PC-3 (cell line): ENCODE measurements at regions of chr5 and their contacts with region 1.

Region 1: DNA sequence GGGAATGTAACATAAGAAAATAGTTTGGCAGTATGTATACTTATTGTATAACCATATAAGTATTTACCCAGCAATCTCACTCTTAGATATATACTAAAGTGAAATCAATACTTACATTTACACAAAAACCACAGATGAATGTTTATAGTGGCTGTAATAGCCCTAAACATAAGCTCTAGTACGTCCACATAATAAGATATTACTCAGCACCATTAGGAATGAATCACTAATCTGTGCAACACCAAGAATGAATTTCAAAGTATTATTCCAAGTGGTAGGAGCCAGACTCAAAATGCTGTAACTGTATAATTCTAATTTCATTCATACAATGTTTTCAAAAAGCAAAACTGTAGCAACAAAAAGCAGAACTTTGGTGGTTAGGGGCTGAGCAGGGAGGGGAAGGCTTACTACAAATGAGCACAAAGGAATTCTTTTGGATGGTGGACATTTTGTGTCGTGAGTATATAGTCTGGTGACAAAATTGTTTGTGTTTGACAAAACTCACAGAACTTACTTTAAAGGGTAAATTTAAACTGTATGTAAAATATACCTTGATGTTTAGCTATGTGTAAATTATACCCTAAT is 11.9 kb upstream of the C5orf46 start:
- DNase-seq: peak; percentile 94
- ATAC-seq: peak; percentile 73
- H3K4me3 ChIP-seq: peak overlapping the region; percentile 52; the same call in 1 of the 2 replicates
- H3K27ac ChIP-seq: peak overlapping the region; percentile 97
- H3K4me1 ChIP-seq: peaks cover 72% of the 10 kb centered on the region
- H3K27me3 ChIP-seq: no peaks in the 10 kb centered on the region
- CTCF ChIP-seq: no peak

Region 2: DNA sequence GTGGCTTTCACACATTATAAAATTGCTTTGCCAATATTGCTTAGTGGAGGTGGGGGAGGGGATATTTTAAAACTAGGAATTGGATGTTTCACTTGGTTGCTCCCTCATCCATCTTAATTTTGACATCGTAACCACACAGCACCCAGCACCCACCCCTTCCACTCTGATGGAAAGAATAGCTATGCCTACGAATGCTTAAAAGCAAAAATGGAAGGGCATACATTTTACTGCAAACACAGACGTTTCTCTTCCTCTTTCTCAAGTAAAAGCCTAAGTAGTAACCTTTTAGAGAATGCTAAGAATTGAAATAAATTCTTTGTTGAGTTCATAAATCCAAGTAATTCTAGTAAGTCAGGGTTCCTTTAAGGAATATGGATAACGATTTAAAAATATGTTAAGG is 205.6 kb before region 1 on chr5:
- CTCF ChIA-PET with region 1: no interaction called
- POLR2A ChIA-PET with region 1: no interaction called
- intact Hi-C with region 1: no loop called
- DNase-seq: no peak
- ATAC-seq: no peak
- H3K4me3 ChIP-seq: no peak overlapping the region
- H3K27ac ChIP-seq: no peak overlapping the region
- H3K4me1 ChIP-seq: peaks cover 12% of the 10 kb centered on the region
- H3K27me3 ChIP-seq: no peaks in the 10 kb centered on the region
- CTCF ChIP-seq: no peak

Region 3: DNA sequence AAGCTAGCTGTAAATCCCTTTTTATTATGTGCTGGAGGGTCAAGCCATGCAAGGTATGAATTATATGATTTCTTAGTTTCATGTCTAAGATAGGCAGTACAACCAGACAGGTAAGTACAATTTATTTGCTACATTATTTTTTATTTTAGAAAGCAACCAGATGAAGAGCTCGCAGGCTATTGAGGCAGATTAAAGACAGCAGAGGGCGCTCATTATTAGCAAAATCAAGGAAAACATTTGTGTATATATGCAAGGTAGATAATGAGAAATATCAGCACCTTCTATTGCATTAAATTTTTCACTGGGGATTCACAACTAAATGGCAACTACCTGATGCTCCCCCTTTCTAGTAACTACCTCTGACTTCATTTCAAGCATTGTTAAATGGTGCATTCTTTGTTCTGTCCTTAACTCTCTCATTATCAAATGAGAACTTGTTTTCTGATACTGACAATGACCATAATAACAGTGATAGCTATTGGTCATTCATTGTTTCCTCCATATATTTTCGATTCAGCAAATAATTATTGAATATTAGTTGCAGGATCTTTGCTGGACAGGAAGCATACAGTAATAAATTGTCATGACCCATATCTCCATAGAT is 31.1 kb before region 1 on chr5:
- CTCF ChIA-PET with region 1: interaction called, 3 read pairs
- POLR2A ChIA-PET with region 1: no interaction called
- intact Hi-C with region 1: loop called (anchors 1 kb)
- DNase-seq: peak; percentile 80
- ATAC-seq: peak; percentile 63
- H3K4me3 ChIP-seq: no peak overlapping the region
- H3K27ac ChIP-seq: peak overlapping the region; percentile 97
- H3K4me1 ChIP-seq: peaks cover 51% of the 10 kb centered on the region
- H3K27me3 ChIP-seq: no peaks in the 10 kb centered on the region
- CTCF ChIP-seq: peak; percentile 96

Region 4: DNA sequence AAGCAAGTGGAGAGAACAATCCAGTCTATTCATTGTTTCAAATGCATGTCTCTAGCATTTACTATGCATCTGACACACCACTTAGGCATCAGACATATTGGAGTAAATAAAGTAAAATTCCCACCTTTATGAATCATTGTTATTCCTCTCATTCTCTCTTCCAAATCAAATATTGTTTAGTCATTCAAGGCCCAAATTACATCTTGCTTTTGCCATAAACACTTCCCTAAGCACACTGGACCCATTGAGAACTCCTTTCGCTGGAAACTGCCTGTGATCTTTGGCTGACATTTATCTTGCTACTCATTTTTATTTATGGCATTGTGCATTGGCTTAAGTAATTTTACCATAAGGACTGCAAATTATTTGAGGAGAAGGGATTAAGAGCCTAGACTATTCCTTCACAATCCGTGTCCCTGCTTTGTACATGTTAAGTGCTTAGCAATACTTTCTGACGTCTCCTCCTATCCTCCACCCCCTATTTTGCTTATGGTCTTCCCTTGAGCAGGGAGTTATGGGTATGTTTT is 19.3 kb before region 1 on chr5:
- CTCF ChIA-PET with region 1: no interaction called
- POLR2A ChIA-PET with region 1: interaction called, 17 read pairs
- intact Hi-C with region 1: loop called (anchors 1 kb)
- DNase-seq: peak; percentile 98
- ATAC-seq: peak; percentile 82
- H3K4me3 ChIP-seq: peak overlapping the region; percentile 22
- H3K27ac ChIP-seq: peak overlapping the region; percentile 97
- H3K4me1 ChIP-seq: peaks cover 96% of the 10 kb centered on the region
- H3K27me3 ChIP-seq: no peaks in the 10 kb centered on the region
- CTCF ChIP-seq: no peak